CD8-positive, alpha-beta T cell (primary cell): ENCODE measurements at regions of chr4 and their contacts with region 1.

Region 1: DNA sequence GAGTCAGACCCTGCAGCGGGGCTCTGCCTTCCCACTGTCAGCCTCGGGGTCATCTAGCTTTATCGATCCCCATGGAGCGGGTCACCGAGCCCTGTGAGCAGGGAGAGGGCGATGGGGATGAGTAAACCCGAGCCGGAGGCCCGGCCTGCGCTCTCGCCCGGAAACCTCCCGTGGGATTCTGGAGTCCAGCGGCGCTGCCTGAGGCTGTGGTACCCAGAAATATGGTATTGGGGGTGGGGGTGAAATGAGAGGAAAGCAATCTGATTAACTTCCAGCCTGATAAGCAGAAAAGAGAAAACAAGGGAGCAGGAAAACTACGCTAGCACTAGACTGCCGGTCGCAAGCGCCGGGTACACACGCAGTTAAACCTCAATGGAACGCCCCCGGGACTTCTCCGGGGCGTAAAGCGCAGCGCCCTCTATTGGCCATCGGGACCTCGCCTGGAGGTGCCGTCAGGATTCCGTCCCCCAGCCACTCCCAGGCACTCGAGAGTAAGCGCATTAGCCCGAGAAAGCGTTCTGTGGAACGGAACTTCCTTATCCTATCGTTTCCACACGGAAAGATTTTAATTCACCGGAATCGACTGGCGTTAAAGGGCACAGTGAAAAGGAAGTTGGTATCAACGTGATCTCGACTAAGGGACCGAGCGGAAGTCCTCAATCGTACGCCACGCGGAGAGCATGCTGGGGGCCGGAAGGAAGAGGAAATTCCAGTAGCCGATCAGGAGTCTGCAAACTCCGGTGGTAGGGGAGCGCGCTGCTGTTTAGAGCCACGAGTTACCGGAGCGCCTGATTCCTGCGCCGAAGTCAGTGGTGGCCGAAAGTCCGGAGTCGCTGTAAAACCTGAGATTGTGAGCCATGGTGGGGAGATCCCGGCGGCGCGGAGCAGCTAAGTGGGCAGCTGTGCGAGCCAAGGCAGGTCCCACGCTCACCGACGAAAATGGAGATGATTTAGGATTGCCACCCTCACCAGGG is at the start of gene UTP3:
- DNase-seq: peak; percentile 84 to 98 (median 93)
- ATAC-seq: peak; percentile 89
- H3K4me3 ChIP-seq: peak within 1 kb of the TSS; percentile 78 to 84
- H3K4me3 Mint-ChIP-seq: peak within 1 kb of the TSS; percentile 98
- H3K27ac ChIP-seq: peak within 1 kb of the TSS; percentile 85 to 92
- H3K27ac Mint-ChIP-seq: peak within 1 kb of the TSS; percentile 99
- H3K4me1 ChIP-seq: peaks cover 21% of the 10 kb centered on the region
- H3K4me1 Mint-ChIP-seq: peaks cover 44% of the 10 kb centered on the region
- H3K27me3 ChIP-seq: no peaks in the 10 kb centered on the region
- H3K27me3 Mint-ChIP-seq: no peaks in the 10 kb centered on the region
- CTCF ChIP-seq: peak; percentile 96
- total RNA-seq, gene UTP3: 21.6 to 23.1 TPM

Region 2: DNA sequence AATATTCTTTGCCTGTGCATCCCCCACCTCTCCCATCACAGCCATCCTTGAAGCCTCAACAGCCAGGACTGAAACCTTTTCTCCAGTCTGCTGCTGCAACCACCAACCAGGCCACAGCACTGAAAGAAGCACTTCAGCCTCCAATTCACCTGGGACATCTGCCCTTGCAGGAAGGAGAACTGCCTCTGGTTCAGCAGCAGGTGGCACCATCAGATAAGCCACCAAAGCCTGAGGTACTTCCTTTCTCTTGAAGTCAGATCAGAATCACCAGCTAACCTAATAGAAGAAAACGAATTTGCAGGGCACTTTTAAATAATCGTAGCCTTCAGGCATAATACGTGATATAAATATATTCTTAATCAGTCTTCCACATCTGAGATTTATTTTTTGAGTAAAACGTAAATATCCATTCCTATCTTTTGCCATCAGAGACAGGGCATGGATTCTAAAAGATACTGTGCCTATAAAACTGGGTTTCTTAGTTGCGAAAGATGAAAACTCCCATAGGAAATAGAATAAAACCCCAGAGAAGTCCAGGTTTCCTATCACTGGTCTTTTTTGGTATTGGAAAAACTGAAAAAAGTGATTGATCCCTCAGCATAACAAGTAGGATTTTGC is 86.6 kb before region 1 on chr4:
- CTCF ChIA-PET with region 1: no interaction called
- POLR2A ChIA-PET with region 1: no interaction called
- intact Hi-C with region 1: loop called in 1 of 2 experiments (anchors 1 kb)
- DNase-seq: peak; percentile 34 to 79 (median 61)
- ATAC-seq: peak; percentile 77
- H3K4me3 ChIP-seq: no peak overlapping the region
- H3K4me3 Mint-ChIP-seq: no peak overlapping the region
- H3K27ac ChIP-seq: no peak overlapping the region
- H3K27ac Mint-ChIP-seq: no peak overlapping the region
- H3K4me1 ChIP-seq: peaks cover 6% of the 10 kb centered on the region
- H3K4me1 Mint-ChIP-seq: no peaks in the 10 kb centered on the region
- H3K27me3 ChIP-seq: no peaks in the 10 kb centered on the region
- H3K27me3 Mint-ChIP-seq: peaks cover 4% of the 10 kb centered on the region
- CTCF ChIP-seq: peak; percentile 90

Region 3: DNA sequence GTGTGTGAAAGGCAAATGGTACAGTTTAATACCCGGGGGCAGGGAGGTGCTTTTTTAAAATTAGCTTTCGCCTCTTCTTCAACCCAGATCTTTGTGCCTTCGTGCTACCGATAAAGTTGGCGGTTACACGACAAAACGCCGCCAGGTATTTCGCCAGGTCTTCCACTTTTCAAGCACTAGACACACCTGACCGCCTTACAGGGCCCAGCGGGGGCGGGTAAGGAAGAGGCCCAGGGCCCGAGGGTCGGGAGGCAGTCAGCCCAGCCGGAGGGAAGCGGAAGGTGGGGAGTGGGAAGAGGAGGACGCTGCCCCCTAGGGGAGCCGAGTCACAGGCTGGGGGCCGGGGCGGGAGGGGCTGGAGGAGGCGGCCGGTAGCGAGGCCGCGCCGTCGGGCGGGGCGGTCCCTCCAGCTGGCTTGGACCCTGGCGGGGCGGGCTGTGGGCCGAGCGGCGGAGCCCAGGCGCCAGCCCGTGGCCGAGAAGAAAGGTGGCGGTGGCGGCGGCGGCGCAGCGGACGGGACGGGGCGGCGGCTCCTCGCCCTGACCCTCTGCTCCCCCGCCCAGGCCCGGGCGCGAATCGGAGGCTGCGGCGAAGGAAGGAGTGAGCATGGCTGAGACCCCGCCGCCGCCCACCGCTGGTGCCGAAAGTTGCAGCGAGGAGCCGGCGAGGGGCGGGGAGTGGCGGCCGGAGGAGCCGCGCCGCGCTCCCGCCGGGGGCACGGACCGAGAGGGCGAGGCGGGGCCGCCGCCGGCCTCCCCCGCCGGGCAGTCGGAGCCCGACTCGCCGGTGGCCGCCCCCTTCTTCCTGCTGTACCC is 16.4 kb after region 1 on chr4:
- CTCF ChIA-PET with region 1: interaction called, 23 read pairs
- POLR2A ChIA-PET with region 1: interaction called, 80 read pairs
- intact Hi-C with region 1: loop called (anchors 1 kb)
- DNase-seq: peak; percentile 32 to 84 (median 62)
- ATAC-seq: peak; percentile 45
- H3K4me3 ChIP-seq: peak overlapping the region; percentile 53 to 64
- H3K4me3 Mint-ChIP-seq: peak overlapping the region; percentile 93
- H3K27ac ChIP-seq: peak overlapping the region; percentile 59 to 86
- H3K27ac Mint-ChIP-seq: peak overlapping the region; percentile 88
- H3K4me1 ChIP-seq: peaks cover 29% of the 10 kb centered on the region
- H3K4me1 Mint-ChIP-seq: peaks cover 28% of the 10 kb centered on the region
- H3K27me3 ChIP-seq: no peaks in the 10 kb centered on the region
- H3K27me3 Mint-ChIP-seq: no peaks in the 10 kb centered on the region
- CTCF ChIP-seq: no peak

Region 4: DNA sequence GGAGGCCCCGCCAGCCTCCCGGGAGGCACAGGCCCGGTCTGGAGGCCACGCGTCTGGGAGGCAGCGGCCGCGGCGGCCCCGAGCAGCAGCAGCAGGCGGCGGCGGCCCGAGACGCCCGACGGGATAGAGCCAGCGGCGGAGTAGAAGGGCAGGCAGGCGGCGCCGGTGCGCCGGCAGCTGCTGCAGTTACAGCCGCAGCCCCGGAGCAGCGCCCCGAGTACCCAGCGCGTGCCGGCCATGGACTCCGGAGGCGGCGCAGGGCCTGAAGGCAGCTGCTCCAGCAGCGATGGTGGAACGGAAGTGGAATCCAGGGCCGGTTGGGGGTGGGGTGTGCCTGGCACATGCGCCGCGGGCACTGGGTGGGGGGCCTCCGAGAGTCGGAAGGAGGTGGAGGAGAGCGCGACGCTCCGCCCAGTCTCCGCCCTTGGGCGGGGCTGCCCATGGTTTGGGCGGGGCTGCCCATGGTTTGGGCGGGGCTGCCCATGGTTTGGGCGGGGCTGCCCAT is 151.5 kb after region 1 on chr4 and contains the start of gene GRSF1:
- CTCF ChIA-PET with region 1: interaction called, 3 read pairs
- POLR2A ChIA-PET with region 1: interaction called, 20 read pairs
- intact Hi-C with region 1: loop called (anchors 1 kb)
- DNase-seq: peak; percentile 90 to 97 (median 95)
- ATAC-seq: peak; percentile 94
- H3K4me3 ChIP-seq: peak within 1 kb of the TSS; percentile 65 to 80
- H3K4me3 Mint-ChIP-seq: peak within 1 kb of the TSS; percentile 97
- H3K27ac ChIP-seq: peak within 1 kb of the TSS; percentile 80
- H3K27ac Mint-ChIP-seq: peak within 1 kb of the TSS; percentile 97
- H3K4me1 ChIP-seq: peaks cover 29% of the 10 kb centered on the region
- H3K4me1 Mint-ChIP-seq: peaks cover 31% of the 10 kb centered on the region
- H3K27me3 ChIP-seq: no peaks in the 10 kb centered on the region
- H3K27me3 Mint-ChIP-seq: no peaks in the 10 kb centered on the region
- CTCF ChIP-seq: no peak
- total RNA-seq, gene GRSF1: 32.1 to 35.7 TPM

Region 5: GRCh38 chr4:70901984-70902576 is 214.0 kb after region 1 on chr4 and contains the start of gene MOB1B:
- CTCF ChIA-PET with region 1: no interaction called
- POLR2A ChIA-PET with region 1: interaction called, 4 read pairs
- intact Hi-C with region 1: loop called (anchors 2 to 5 kb)
- DNase-seq: peak; percentile 62 to 90 (median 84)
- ATAC-seq: peak; percentile 95
- H3K4me3 ChIP-seq: peak within 1 kb of the TSS; percentile 86 to 88
- H3K4me3 Mint-ChIP-seq: peak within 1 kb of the TSS; percentile 99
- H3K27ac ChIP-seq: peak within 1 kb of the TSS; percentile 40 to 46
- H3K27ac Mint-ChIP-seq: peak within 1 kb of the TSS; percentile 86
- H3K4me1 ChIP-seq: peaks cover 19% of the 10 kb centered on the region
- H3K4me1 Mint-ChIP-seq: peaks cover 36% of the 10 kb centered on the region
- H3K27me3 ChIP-seq: no peaks in the 10 kb centered on the region
- H3K27me3 Mint-ChIP-seq: no peaks in the 10 kb centered on the region
- CTCF ChIP-seq: peak; percentile 39
- total RNA-seq, gene MOB1B: 9.7 to 11.1 TPM